ENCODE measurements at regions of chr20 and their contacts with region 1.

Region 1: GRCh38 chr20:53124075-53124551 is 152.0 kb downstream of the TSHZ2 start:
- DNase-seq: peak in 2 of 4 experiments; percentile 10 to 16
- ATAC-seq: peak; percentile 64; the same call in 1 of the 3 replicates
- H3K4me3 ChIP-seq: no peak overlapping the region
- H3K27ac ChIP-seq: no peak overlapping the region
- H3K4me1 ChIP-seq: no peaks in the 10 kb centered on the region
- H3K27me3 ChIP-seq: peaks cover 0 to 11% of the 10 kb centered on the region in 2 experiments; a peak in 3 of 5 replicates
- CTCF ChIP-seq: peak; percentile 20 to 70 (median 39); a peak in 3 of 6 replicates
- EP300 ChIP-seq: no peak
- POLR2A ChIP-seq: no peak
- RAD21 ChIP-seq: peak; percentile 52 to 63

Region 2: GRCh38 chr20:53061192-53062108 is 62.7 kb before region 1 on chr20:
- CTCF ChIA-PET with region 1: no interaction called
- POLR2A ChIA-PET with region 1: no interaction called
- in situ Hi-C with region 1: no loop called
- intact Hi-C with region 1: no loop called
- DNase-seq: no peak
- ATAC-seq: no peak
- H3K4me3 ChIP-seq: no peak overlapping the region
- H3K27ac ChIP-seq: no peak overlapping the region
- H3K4me1 ChIP-seq: no peaks in the 10 kb centered on the region
- H3K27me3 ChIP-seq: peaks cover 0 to 12% of the 10 kb centered on the region in 2 experiments; a peak in 2 of 5 replicates
- CTCF ChIP-seq: no peak
- EP300 ChIP-seq: no peak
- POLR2A ChIP-seq: no peak
- RAD21 ChIP-seq: no peak

Region 3: GRCh38 chr20:53195876-53196610 is 71.9 kb after region 1 on chr20:
- CTCF ChIA-PET with region 1: no interaction called
- POLR2A ChIA-PET with region 1: no interaction called
- in situ Hi-C with region 1: no loop called
- intact Hi-C with region 1: loop called (anchors 5 kb)
- DNase-seq: peak in 2 of 4 experiments; percentile 44 to 49
- ATAC-seq: peak; percentile 38; the same call in 1 of the 3 replicates
- H3K4me3 ChIP-seq: no peak overlapping the region
- H3K27ac ChIP-seq: no peak overlapping the region
- H3K4me1 ChIP-seq: peaks cover 0 to 6% of the 10 kb centered on the region in 2 experiments; a peak in 1 of 5 replicates
- H3K27me3 ChIP-seq: peaks cover 13 to 19% of the 10 kb centered on the region in 2 experiments; a peak in 4 of 5 replicates
- CTCF ChIP-seq: peak; percentile 27 to 63 (median 29); a peak in 3 of 6 replicates
- EP300 ChIP-seq: no peak
- POLR2A ChIP-seq: no peak
- RAD21 ChIP-seq: peak in 1 of 2 experiments; percentile 52; a peak in 3 of 4 replicates

Region 4: GRCh38 chr20:53216856-53217576 is 92.9 kb after region 1 on chr20:
- CTCF ChIA-PET with region 1: interaction called, 12 read pairs
- POLR2A ChIA-PET with region 1: no interaction called
- in situ Hi-C with region 1: no loop called
- intact Hi-C with region 1: loop called (anchors 5 kb)
- DNase-seq: peak; percentile 72 to 83 (median 78)
- ATAC-seq: peak; percentile 99
- H3K4me3 ChIP-seq: no peak overlapping the region
- H3K27ac ChIP-seq: no peak overlapping the region
- H3K4me1 ChIP-seq: peaks cover under 1 to 5% of the 10 kb centered on the region in 2 experiments; a peak in 4 of 5 replicates
- H3K27me3 ChIP-seq: peaks cover 0 to 2% of the 10 kb centered on the region in 2 experiments; a peak in 2 of 5 replicates
- CTCF ChIP-seq: peak; percentile 81 to 91 (median 88)
- EP300 ChIP-seq: no peak
- POLR2A ChIP-seq: no peak
- RAD21 ChIP-seq: peak; percentile 80 to 89